Endothelial cell of umbilical vein (primary cell): ENCODE measurements at regions of chr11 and their contacts with region 1.

Region 1: GRCh38 chr11:126115816-126116331 is 53.2 kb upstream of the CDON start:
- DNase-seq: peak; percentile 94
- H3K4me3 ChIP-seq: no peak overlapping the region
- H3K27ac ChIP-seq: no peak overlapping the region
- H3K4me1 ChIP-seq: no peaks in the 10 kb centered on the region
- H3K27me3 ChIP-seq: no peaks in the 10 kb centered on the region
- CTCF ChIP-seq: peak in 1 of 2 donors; percentile 39
- POLR2A ChIP-seq: no peak

Region 2: DNA sequence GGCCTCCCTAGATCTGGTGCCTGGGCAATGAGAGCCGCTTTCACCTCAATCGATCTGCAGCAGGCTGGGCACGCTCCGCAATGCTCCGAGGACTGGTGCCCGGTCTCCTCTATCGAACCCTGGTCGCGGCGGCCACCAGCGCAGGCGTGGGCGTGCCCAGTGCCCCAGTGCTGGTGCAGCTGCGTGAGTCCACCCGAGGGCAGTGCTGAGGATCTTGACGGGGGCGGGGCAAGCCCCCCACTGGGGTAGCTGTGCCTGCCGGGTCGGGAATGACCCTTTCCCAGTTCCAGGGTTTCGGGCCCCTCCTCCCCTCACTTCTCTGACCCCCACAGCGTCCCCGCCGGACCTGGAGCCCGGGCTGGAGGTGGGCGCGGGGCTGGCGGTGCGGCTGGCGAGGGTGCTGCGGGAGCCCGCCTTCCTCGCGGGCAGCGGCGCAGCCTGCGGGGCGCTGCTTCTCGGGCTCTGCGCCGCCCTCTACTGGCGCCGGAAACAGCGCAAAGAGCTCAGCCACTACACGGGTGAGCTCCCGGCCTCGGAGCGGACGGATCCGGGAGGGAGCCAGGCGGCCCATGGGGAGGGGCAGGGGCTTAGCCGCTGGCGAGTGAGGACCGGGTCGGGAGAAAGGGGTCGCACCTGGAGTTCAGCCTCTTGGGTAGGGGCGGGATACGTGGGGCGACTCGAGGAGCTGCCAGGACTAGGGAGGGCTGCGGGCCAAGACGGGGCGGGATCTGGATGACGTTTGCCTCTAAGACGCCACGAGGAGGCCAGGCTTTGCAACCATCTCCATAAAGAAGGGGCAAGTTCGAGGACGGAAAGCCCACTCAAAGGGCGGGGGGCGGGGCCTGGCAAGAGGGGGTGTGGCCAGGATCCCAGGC is 1239.7 kb before region 1 on chr11:
- CTCF ChIA-PET with region 1: no interaction called
- POLR2A ChIA-PET with region 1: no interaction called
- dilution Hi-C with region 1: no loop called
- intact Hi-C with region 1: no loop called
- DNase-seq: peak; percentile 97
- H3K4me3 ChIP-seq: peak overlapping the region; percentile 14 to 49 (median 47)
- H3K27ac ChIP-seq: peak overlapping the region; percentile 65
- H3K4me1 ChIP-seq: peaks cover 21% of the 10 kb centered on the region
- H3K27me3 ChIP-seq: peaks cover 21 to 26% of the 10 kb centered on the region in 2 experiments
- CTCF ChIP-seq: peak; percentile 63 to 74
- POLR2A ChIP-seq: no peak

Region 3: DNA sequence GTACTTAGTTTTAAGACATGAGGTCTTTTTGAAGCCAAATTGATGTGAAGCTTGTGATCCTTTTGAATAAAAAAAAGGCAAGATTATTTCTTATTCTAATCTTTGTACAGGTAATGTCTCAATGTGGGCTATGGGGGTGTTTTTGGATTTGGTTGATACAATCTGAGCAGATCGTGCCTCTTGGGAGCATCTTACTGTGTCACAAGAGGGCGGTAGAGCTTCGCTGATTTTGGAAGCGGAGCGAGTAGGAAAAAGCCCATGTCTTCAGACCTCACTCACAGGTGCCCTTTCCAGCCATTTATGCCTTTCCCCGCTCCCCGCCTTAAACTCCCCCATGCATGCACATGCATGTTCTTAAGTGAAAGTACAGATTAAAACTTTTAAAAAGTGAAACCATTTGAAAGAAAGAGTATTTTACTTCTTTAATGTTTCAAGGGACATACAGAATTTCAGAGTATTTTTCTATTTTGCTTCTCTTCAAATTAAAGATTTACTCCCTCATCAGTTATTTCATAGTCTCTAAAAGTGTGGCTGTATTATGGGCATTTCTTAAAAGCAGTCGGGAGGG is 192.8 kb before region 1 on chr11:
- CTCF ChIA-PET with region 1: no interaction called
- POLR2A ChIA-PET with region 1: no interaction called
- dilution Hi-C with region 1: no loop called
- intact Hi-C with region 1: loop called (anchors 2 kb)
- DNase-seq: peak; percentile 69
- H3K4me3 ChIP-seq: no peak overlapping the region
- H3K27ac ChIP-seq: no peak overlapping the region
- H3K4me1 ChIP-seq: no peaks in the 10 kb centered on the region
- H3K27me3 ChIP-seq: peaks cover 2 to 7% of the 10 kb centered on the region in 2 experiments
- CTCF ChIP-seq: peak; percentile 73 to 74
- POLR2A ChIP-seq: no peak

Region 4: DNA sequence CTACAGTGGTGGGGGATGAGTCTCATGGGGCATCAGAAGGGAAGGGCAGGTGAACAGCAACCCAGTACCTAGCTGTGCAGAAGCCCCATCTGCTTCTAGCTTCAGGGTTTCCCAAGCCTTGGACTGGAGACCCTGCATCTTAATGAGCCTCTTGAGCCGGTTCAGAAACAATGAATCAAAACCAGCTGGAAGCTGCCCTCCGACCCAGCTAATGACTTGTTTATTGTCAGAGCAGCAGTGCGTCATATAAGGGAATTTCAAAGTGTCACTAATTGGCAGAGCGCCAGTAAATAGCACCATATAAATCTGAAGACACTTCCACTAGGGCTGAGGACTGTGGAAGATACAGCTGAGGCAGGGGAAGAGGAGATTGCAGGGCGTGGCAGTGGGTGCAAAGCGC is 38.1 kb after region 1 on chr11:
- CTCF ChIA-PET with region 1: interaction called, 11 read pairs
- POLR2A ChIA-PET with region 1: no interaction called
- dilution Hi-C with region 1: no loop called
- intact Hi-C with region 1: no loop called
- DNase-seq: peak; percentile 98
- H3K4me3 ChIP-seq: no peak overlapping the region
- H3K27ac ChIP-seq: peak overlapping the region; percentile 47
- H3K4me1 ChIP-seq: peaks cover 25% of the 10 kb centered on the region
- H3K27me3 ChIP-seq: no peaks in the 10 kb centered on the region
- CTCF ChIP-seq: no peak
- POLR2A ChIP-seq: peak; percentile 66

Region 5: DNA sequence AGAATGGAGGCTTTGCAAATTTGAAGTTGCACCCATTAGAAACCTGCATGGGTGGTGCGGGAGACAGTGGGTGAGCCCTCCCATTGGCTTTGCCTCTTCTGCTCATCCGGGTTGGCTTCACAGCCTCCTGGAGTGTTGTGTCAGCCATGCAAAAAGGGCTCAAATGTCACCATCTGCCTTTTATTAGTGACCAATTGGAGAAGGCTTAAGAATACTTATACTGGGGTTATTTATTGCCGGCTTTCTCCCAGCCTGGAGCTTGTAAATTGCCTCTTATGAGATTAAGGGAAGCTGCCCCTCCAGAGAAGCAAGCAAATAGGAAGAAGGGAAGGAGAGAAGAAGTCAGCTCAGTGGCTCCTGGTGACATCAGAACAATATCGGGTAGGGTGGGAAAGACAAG is 422.2 kb after region 1 on chr11:
- CTCF ChIA-PET with region 1: no interaction called
- POLR2A ChIA-PET with region 1: no interaction called
- dilution Hi-C with region 1: no loop called
- intact Hi-C with region 1: no loop called
- DNase-seq: no peak
- H3K4me3 ChIP-seq: no peak overlapping the region
- H3K27ac ChIP-seq: no peak overlapping the region
- H3K4me1 ChIP-seq: no peaks in the 10 kb centered on the region
- H3K27me3 ChIP-seq: no peaks in the 10 kb centered on the region
- CTCF ChIP-seq: no peak
- POLR2A ChIP-seq: no peak